ENCODE measurements at regions of chr2 and their contacts with region 1.

Region 1: GRCh38 chr2:168346725-168347477 is 99.5 kb upstream of the STK39 start:
- DNase-seq: peak; percentile 69 to 86
- H3K4me3 ChIP-seq: no peak overlapping the region
- CTCF ChIP-seq: no peak
- POLR2A ChIP-seq: no peak

Region 2: GRCh38 chr2:168231609-168232241 is 115.2 kb before region 1 on chr2:
- intact Hi-C with region 1: no loop called
- DNase-seq: no peak
- H3K4me3 ChIP-seq: no peak overlapping the region
- CTCF ChIP-seq: no peak
- POLR2A ChIP-seq: no peak

Region 3: GRCh38 chr2:168283212-168283611 is 63.7 kb before region 1 on chr2:
- intact Hi-C with region 1: no loop called
- DNase-seq: no peak
- H3K4me3 ChIP-seq: no peak overlapping the region
- CTCF ChIP-seq: no peak
- POLR2A ChIP-seq: no peak

Region 4: DNA sequence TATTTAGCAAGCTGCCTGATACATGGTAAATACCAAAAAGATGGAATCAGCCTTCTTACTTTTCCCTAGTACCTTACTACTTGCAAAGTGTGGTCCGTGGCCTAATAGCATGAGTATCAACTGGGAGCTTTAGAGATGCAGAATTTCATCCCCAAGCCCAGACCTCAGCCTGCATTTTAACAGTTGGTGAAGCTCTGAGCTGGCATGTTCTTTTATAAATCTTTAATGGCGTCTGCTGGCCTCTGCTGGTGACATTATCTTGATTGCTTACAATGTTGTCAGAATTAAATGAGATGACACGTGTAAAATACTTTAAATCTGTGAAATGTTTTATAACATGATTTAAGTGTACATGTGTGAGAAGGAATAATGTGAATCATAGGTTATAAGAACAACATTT is 340.4 kb after region 1 on chr2:
- intact Hi-C with region 1: loop called (anchors 5 kb)
- DNase-seq: no peak
- H3K4me3 ChIP-seq: no peak overlapping the region
- CTCF ChIP-seq: no peak
- POLR2A ChIP-seq: no peak

Region 5: GRCh38 chr2:168758970-168759820 is 412.3 kb after region 1 on chr2:
- intact Hi-C with region 1: loop called (anchors 10 kb)
- DNase-seq: no peak
- H3K4me3 ChIP-seq: no peak overlapping the region
- CTCF ChIP-seq: no peak
- POLR2A ChIP-seq: no peak

Region 6: DNA sequence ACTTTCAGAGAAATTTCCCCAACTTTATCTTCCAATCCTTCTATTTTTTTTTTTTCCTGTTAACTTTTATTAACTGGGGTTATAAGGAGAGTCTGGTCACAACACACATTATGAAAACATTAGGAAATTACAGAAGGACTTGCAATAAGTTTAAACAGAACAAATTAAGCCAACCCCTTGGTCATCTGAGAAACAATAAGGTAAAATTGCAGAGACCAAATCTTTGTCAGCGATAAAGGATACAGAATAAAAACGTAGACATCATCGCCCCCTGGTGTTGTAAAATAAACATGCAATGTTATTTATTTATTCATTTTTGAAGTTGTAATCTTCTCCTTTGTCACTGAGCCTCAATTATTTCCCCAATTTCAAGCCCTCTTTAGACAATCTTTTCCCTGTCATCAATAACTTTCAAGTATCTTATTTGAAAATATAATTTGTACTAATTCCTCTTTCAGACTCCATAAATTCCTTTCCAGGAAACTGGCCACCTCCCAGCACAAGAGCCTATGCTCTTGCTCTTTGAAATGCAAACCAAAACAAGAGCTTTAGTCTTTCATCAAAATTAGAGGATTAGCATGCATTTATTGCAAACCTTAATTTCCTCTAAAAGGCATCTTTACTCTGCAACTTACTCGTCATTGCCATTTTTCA is 573.7 kb after region 1 on chr2:
- intact Hi-C with region 1: loop called (anchors 5 kb)
- DNase-seq: no peak
- H3K4me3 ChIP-seq: no peak overlapping the region
- CTCF ChIP-seq: no peak
- POLR2A ChIP-seq: no peak

Measured in lower leg skin (tissue), 4 donors.